ENCODE measurements at regions of chr1 and their contacts with region 1.

Region 1: GRCh38 chr1:160539990-160540858 is 17.2 kb upstream of the SLAMF6 start:
- DNase-seq: no peak
- H3K4me3 ChIP-seq: no peak overlapping the region
- H3K27ac ChIP-seq: no peak overlapping the region
- H3K4me1 ChIP-seq: no peaks in the 10 kb centered on the region
- H3K27me3 ChIP-seq: no peaks in the 10 kb centered on the region
- CTCF ChIP-seq: no peak
- POLR2A ChIP-seq: no peak

Region 2: DNA sequence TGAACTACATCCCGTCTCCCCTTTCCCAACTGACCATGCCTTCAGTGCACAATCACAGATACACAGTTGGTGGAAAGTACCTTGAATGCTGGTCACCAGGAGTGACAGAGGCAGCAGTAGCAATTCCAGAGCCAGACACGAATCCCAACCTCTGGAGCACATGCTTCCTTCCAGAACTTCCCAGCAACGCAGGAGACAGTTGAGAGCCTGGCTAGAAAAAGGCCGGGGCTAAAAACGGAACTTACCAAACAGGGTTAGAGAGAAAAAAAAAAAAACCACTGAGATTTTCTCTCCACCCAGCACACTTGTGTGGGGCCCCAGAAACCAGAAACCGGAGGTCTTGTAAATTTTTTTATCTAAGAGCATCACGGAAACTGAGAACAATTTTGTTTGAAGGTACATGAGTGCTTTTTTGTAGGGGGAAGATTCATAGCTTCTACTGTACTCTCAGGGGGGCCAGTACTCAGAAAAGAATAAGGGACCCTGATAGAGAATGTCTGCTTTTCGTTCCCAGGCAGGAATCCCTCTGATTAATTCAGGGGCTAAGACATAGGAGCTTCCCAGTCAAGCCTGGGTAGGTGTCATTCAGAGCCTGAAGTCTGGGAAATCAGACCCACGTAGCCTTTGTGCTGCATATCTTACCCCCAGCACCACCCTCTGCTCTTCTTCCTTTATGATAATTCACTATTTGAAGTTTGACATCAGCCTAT is 171.5 kb after region 1 on chr1 and contains the start of gene CD48:
- intact Hi-C with region 1: loop called (anchors 5 kb)
- DNase-seq: no peak
- H3K4me3 ChIP-seq: peak within 1 kb of the TSS in 1 of 3 donors; percentile 18
- H3K27ac ChIP-seq: no peak within 1 kb of the TSS
- H3K4me1 ChIP-seq: no peaks in the 10 kb centered on the region
- H3K27me3 ChIP-seq: peaks cover 0 to 3% of the 10 kb centered on the region in 2 donors
- CTCF ChIP-seq: no peak
- POLR2A ChIP-seq: no peak
- total RNA-seq, gene CD48: 5.4 to 12.3 (median 8.8) TPM